ENCODE measurements at regions of chr10 and their contacts with region 1.

Region 1: GRCh38 chr10:126387023-126387921 is 1.0 kb downstream of the ADAM12 start:
- DNase-seq: no peak
- H3K4me3 ChIP-seq: peak overlapping the region; percentile 65
- H3K27ac ChIP-seq: peak overlapping the region; percentile 31
- H3K27me3 ChIP-seq: no peaks in the 10 kb centered on the region
- CTCF ChIP-seq: peak; percentile 85

Region 2: DNA sequence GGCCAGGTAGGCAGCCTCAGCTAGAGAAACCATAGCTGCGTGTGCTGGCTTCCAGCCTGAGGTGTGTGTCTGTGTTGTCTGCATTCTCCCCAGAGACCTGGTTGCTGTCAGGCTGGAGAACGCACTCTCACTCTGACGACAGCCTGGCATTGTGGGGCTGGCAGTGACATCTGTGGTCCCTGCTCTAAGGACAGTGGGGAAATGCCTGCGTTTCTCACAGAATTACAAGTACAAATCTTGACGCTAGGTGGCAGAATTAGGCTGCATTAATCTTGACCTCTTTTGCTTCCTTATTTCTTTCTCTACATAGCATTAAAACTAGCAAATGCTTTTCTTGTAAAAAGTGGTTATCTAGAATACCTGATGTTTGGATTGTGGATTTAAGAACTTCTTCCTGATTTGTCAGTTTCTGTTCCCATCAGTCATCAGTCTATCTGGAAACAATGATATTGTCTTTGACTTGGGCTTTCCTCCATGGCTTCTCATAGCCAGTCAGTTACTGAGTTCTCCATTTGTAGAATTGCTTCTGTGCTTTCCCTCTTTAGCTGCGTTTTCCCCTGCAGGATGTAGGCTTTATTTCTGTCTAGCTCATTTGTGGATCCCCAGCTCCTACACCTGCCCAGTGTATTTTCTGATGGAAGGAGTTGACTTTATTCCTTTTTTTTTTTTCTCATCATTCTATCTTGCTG is 404.9 kb before region 1 on chr10:
- CTCF ChIA-PET with region 1: interaction called, 18 read pairs
- POLR2A ChIA-PET with region 1: no interaction called
- DNase-seq: peak; percentile 23
- H3K4me3 ChIP-seq: no peak overlapping the region
- H3K27ac ChIP-seq: no peak overlapping the region
- H3K27me3 ChIP-seq: no peaks in the 10 kb centered on the region
- CTCF ChIP-seq: peak; percentile 58

Region 3: DNA sequence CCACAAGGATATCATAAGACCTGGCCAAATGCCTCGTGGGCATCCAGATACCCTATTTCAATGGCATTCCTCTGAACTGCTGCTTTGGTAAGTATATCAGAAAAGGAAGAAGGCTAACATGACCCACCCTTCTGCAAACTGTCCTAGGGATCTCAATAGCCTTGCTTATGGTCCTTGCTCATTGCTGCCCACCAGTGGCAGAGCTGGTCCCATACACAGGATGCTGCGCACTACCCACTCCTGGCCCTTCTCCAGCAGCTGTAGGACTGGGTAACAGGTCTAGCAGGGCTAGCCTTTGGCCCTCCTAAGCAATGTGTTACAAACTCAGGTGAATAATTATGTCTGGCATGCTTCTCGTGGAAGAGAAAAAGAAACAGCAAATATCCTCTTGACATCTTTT is 210.7 kb after region 1 on chr10:
- CTCF ChIA-PET with region 1: no interaction called
- POLR2A ChIA-PET with region 1: interaction called, 10 read pairs
- DNase-seq: no peak
- H3K4me3 ChIP-seq: no peak overlapping the region
- H3K27ac ChIP-seq: no peak overlapping the region
- H3K27me3 ChIP-seq: no peaks in the 10 kb centered on the region
- CTCF ChIP-seq: peak; percentile 66

Measured in AG04450 (cell line).